ENCODE measurements at regions of chr19 and their contacts with region 1.

Region 1: GRCh38 chr19:34428549-34429285 is 536 bp downstream of the UBA2 start:
- DNase-seq: peak; percentile 63
- ATAC-seq: peak; percentile 28
- H3K4me3 Mint-ChIP-seq: peak overlapping the region; percentile 99
- H3K27ac Mint-ChIP-seq: peak overlapping the region; percentile 92
- H3K4me1 Mint-ChIP-seq: peaks cover 28% of the 10 kb centered on the region
- H3K27me3 Mint-ChIP-seq: no peaks in the 10 kb centered on the region

Region 2: DNA sequence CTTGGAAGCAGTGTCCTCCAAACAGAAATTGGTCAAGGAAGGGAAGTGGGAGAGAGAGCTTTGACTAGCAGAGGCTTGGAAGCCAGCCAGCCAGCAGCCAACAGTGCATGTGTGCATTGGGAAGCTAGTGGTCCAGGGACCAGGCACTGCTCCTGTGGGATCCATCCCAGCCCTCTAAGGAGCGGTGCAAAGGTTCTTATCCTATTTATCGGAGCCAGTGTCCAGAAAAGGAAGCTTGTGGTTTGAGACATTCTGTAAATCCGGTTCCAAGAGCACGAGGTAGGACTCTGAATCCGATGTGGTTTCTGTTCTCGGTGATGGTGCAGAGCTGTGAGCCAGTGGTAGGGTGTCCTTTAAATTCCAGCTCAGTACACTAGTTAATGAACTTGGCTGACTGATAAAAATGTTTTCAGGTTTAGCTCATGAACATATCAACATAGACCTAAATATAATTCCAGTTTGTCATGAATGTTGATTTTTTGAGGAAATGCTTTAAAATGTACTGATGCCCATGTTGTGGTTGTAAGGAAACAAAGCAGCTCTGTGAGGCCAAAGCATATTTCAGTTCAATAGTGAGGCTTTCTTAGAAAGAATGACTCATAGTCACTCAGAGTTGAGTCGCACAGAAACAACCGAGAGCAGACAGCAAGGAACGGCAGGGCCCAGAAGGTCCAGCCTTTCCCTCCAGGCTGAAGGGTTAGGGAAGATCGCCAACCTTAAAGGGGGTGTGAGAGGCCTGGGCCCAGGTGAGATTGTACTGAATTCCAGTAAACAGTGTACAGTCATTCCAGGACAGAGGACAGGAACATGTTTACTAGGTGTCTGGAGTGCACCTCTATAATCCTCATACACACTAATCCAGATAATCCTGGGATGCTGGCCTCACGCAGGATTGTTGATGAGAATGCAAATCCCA is 195.9 kb before region 1 on chr19:
- CTCF ChIA-PET with region 1: no interaction called
- POLR2A ChIA-PET with region 1: no interaction called
- intact Hi-C with region 1: no loop called
- DNase-seq: peak; percentile 53
- ATAC-seq: peak; percentile 87
- H3K4me3 Mint-ChIP-seq: no peak overlapping the region
- H3K27ac Mint-ChIP-seq: peak overlapping the region; percentile 80
- H3K4me1 Mint-ChIP-seq: peaks cover 31% of the 10 kb centered on the region
- H3K27me3 Mint-ChIP-seq: no peaks in the 10 kb centered on the region

Region 3: DNA sequence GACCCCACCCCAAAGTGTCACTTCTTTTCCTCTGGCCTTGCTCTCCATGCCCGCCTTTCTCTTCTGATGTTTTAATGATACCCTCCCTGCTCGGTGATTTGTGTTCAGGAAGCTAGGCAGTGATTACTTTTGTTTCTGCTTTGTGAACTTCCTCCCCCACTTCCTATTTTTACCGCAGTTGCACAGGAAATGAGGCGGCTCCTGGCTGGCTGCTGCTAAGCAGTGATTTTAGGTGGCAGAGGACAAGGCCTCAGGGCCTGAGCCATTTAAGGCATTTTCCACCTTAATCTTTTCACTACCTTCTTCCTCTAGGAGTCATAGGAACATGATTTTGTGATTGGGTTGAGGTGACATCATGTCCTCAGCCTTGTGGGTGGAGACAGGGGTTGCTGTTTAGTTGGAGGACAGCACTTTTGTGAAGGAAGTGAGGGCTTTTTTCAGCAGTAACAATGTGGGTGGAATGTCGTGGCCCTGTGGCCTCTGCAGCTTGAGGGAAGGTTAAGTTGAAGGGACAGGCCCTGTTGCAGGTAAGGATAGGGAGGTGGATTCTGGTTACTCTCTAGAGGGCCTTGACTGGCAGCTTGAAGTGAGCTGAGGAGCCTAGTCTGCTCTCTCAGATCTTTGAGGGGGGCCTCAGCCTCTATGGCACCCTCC is 158.6 kb before region 1 on chr19:
- CTCF ChIA-PET with region 1: no interaction called
- POLR2A ChIA-PET with region 1: interaction called, 3 read pairs
- intact Hi-C with region 1: loop called in 1 of 2 experiments (anchors 1 kb)
- DNase-seq: peak; percentile 82
- ATAC-seq: peak; percentile 90
- H3K4me3 Mint-ChIP-seq: peak overlapping the region; percentile 53
- H3K27ac Mint-ChIP-seq: peak overlapping the region; percentile 95
- H3K4me1 Mint-ChIP-seq: peaks cover 72% of the 10 kb centered on the region
- H3K27me3 Mint-ChIP-seq: no peaks in the 10 kb centered on the region

Region 4: GRCh38 chr19:34364830-34365462 is 63.8 kb before region 1 on chr19 and contains the start of gene GPI:
- CTCF ChIA-PET with region 1: interaction called, 4 read pairs
- POLR2A ChIA-PET with region 1: interaction called, 4 read pairs
- intact Hi-C with region 1: loop called (anchors 1 to 5 kb)
- DNase-seq: peak; percentile 86
- ATAC-seq: peak; percentile 87
- H3K4me3 Mint-ChIP-seq: peak within 1 kb of the TSS; percentile 91
- H3K27ac Mint-ChIP-seq: peak within 1 kb of the TSS; percentile 90
- H3K4me1 Mint-ChIP-seq: peaks cover 52% of the 10 kb centered on the region
- H3K27me3 Mint-ChIP-seq: no peaks in the 10 kb centered on the region
- total RNA-seq, gene GPI: 686 to 839 TPM

Region 5: DNA sequence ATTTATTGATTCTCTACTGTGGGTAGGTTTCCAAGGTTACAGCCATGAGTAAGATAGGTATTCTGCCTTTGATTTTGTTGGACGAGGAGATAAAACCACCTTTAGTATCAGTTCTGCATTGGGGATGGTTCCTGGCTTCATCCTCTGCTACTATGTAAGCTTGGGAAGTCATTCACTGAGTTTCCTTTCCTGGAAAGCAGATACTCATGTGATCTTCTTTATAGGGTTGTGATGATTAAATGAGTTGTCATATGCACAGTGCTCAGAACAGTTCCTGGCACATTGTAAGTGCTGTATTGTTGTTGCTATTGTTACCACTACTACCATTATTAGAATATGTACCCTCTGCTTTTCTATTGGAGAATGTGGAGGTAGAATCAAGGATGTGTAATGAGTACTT is 39.7 kb after region 1 on chr19:
- CTCF ChIA-PET with region 1: interaction called, 3 read pairs
- POLR2A ChIA-PET with region 1: no interaction called
- intact Hi-C with region 1: loop called in 1 of 2 experiments (anchors 5 kb)
- DNase-seq: no peak
- ATAC-seq: peak; percentile 47
- H3K4me3 Mint-ChIP-seq: no peak overlapping the region
- H3K27ac Mint-ChIP-seq: peak overlapping the region; percentile 38
- H3K4me1 Mint-ChIP-seq: peaks cover 5% of the 10 kb centered on the region
- H3K27me3 Mint-ChIP-seq: no peaks in the 10 kb centered on the region

Region 6: DNA sequence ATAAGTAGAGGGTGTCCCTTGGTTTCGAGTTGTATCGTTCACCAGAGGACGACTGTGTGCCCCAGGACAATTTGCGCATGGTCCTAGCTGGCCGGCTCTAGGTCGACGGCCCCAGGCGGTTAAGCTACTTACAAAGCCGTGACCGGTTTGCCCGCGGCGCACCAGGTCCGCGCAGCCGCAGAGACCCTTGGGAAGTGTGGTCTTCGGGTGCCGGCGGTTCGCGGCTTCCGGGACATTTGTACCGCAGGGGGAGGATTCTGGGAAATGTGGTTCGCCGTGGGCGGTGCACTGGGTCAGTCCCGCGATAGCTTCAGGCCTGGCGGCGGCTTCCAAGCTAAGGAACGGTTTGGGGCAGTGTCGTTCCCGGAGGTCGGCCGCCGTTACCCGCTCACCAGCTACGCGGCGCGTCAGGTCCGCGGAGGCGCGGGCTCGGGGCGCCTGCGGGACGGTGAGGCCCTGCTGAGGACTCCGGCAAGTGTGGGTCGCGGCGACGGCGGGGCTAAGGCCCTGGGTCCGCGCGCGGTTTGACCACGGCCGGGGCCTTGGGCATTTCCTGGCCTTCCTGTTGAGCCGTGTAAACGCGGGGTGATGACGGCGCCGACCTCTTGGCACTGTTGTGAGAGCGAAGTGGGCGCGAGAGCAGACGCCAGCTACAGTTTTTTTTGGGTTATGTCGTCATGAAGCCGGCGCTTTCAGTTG is 248.8 kb after region 1 on chr19 and contains the start of gene ZNF302:
- CTCF ChIA-PET with region 1: no interaction called
- POLR2A ChIA-PET with region 1: interaction called, 3 read pairs
- intact Hi-C with region 1: loop called in 1 of 2 experiments (anchors 1 kb)
- DNase-seq: peak; percentile 97
- ATAC-seq: peak; percentile 86
- H3K4me3 Mint-ChIP-seq: peak within 1 kb of the TSS; percentile 81
- H3K27ac Mint-ChIP-seq: peak within 1 kb of the TSS; percentile 99
- H3K4me1 Mint-ChIP-seq: peaks cover 23% of the 10 kb centered on the region
- H3K27me3 Mint-ChIP-seq: no peaks in the 10 kb centered on the region
- total RNA-seq, gene ZNF302: 17.1 to 17.6 TPM

Region 7: DNA sequence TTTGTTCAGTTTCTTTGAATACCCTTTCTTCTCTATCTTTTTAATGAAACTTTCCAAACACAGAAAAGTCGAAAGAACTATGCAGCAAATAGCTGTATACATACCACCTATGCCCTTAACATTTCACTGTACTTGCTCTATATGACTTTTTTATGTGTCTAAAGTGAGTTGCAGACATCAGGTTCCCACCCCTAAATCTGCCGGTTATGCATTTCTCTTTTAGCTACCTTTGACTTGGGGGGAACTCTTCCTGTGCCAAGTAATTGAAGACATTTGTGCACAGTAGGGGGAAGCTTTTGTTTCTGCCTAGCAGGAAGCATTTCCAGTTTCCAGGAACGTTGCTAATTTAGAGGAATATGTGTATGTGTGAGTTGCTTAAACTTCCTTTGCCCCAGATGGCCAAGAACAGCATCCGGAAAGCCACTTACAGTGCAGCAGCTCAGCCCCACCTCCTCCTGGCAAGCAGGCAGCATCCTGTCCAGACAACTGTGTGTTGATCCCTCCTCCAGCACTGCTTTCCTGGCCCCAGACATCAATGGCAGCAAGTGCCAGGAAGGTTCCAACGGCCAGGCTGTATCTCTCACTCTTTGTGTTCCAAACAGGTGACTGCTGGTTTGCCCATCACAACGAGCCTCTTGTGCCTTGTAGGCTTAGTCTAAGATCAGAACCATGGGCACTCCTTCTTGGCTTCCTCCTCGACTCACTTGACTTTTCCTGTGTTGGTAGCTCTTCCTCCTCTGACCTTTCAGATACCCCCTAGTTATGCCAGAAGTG is 556.7 kb after region 1 on chr19:
- CTCF ChIA-PET with region 1: no interaction called
- POLR2A ChIA-PET with region 1: no interaction called
- intact Hi-C with region 1: loop called in 1 of 2 experiments (anchors 5 kb)
- DNase-seq: peak; percentile 55
- ATAC-seq: peak; percentile 52
- H3K4me3 Mint-ChIP-seq: peak overlapping the region; percentile 48
- H3K27ac Mint-ChIP-seq: peak overlapping the region; percentile 86
- H3K4me1 Mint-ChIP-seq: peaks cover 38% of the 10 kb centered on the region
- H3K27me3 Mint-ChIP-seq: no peaks in the 10 kb centered on the region

Region 8: DNA sequence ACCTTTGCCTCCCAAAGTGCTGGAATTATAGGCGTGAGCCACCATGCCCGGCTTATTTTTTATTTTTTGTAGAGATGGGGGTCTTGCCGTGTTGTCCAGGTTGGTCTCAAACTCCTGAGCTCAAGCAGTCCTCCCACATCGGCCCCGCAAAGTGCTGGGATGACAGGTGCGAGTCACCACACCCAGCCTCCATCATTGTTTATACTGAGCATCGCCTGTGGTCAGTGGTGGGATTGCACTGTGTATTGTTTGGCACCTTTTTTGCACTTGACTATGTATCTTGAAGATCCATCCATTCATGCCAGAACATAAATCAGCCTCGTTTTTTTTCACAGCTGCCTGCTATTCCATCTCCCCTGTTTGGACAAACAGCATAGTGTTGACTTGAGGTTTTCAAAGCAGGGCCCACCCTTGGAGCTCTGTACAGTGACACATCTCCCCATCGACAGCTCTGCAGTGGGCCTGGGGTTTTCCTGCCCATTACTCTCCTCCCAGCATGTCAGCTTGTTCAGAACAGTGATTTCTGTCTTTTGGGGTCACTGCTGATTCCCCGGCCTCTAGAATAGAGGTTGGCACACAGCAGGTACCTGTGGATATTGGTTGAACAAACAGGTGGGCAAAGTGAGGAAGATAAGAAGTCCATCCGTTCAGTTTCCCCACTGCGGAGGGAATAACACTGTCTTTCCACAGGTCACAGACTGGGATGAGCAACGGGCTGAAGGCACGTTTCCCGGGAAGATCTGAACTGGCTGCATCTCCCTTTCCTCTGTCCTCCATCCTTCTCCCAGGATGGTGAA is 1229.4 kb after region 1 on chr19:
- CTCF ChIA-PET with region 1: no interaction called
- POLR2A ChIA-PET with region 1: no interaction called
- intact Hi-C with region 1: no loop called
- DNase-seq: peak; percentile 33
- ATAC-seq: peak; percentile 53
- H3K4me3 Mint-ChIP-seq: no peak overlapping the region
- H3K27ac Mint-ChIP-seq: no peak overlapping the region
- H3K4me1 Mint-ChIP-seq: peaks cover 2% of the 10 kb centered on the region
- H3K27me3 Mint-ChIP-seq: no peaks in the 10 kb centered on the region